ENCODE measurements at regions of chr6 and their contacts with region 1.

Region 1: DNA sequence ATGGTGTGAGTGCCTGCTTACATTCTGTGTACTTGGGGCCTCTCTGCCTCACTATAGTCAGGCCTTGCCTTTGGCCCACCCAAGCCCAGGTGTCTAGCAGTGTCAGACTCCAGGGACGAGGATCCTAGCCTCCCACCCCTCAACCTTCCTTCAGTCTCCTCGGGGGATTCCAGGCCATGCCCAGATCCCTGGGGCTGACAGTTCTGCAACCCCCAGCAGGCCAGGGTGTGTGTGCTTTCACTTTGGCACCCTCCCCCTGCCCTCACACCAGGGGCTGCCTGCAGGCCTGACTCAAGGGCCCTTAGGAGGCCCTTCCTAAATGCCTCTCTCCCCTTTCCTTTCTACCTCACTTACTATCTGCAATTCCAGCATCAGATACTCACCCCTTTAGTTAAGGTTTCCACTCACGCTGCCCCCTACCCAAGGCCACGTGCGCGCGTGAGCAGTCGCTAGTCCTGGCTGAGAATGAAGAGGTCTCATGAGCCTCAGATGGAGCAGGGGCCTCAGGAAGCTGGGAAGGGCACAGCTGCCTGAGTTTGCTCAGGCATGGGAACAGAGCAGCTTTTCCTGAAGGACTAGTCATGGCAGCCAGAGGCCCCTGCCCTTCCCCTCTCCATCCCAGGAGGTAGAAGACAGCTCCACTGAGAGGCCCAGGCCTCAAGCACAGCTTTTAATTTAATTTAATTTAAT is 859 bp upstream of the CLPS start:
- DNase-seq: no peak
- H3K4me3 ChIP-seq: no peak overlapping the region
- H3K27ac ChIP-seq: no peak overlapping the region
- H3K27me3 ChIP-seq: peaks cover 32% of the 10 kb centered on the region
- CTCF ChIP-seq: no peak

Region 2: GRCh38 chr6:35786810-35787209 is 11.2 kb before region 1 on chr6:
- CTCF ChIA-PET with region 1: no interaction called
- POLR2A ChIA-PET with region 1: interaction called, 20 read pairs
- DNase-seq: no peak
- H3K4me3 ChIP-seq: no peak overlapping the region
- H3K27ac ChIP-seq: no peak overlapping the region
- H3K27me3 ChIP-seq: peaks cover 54% of the 10 kb centered on the region
- CTCF ChIP-seq: no peak

Region 3: GRCh38 chr6:35824552-35825192 is 26.7 kb after region 1 on chr6:
- CTCF ChIA-PET with region 1: no interaction called
- POLR2A ChIA-PET with region 1: no interaction called
- DNase-seq: no peak
- H3K4me3 ChIP-seq: no peak overlapping the region
- H3K27ac ChIP-seq: no peak overlapping the region
- H3K27me3 ChIP-seq: peaks cover 2% of the 10 kb centered on the region
- CTCF ChIP-seq: no peak

Region 4: GRCh38 chr6:35967076-35967774 is 169.2 kb after region 1 on chr6:
- CTCF ChIA-PET with region 1: no interaction called
- POLR2A ChIA-PET with region 1: no interaction called
- DNase-seq: no peak
- H3K4me3 ChIP-seq: no peak overlapping the region
- H3K27ac ChIP-seq: no peak overlapping the region
- H3K27me3 ChIP-seq: peaks cover 6% of the 10 kb centered on the region
- CTCF ChIP-seq: no peak